Mammary epithelial cell (primary cell): ENCODE measurements at regions of chr1 and their contacts with region 1.

Region 1: GRCh38 chr1:160726498-160727315 is 12.3 kb upstream of the SLAMF7 start:
- DNase-seq: peak; percentile 72
- H3K4me3 ChIP-seq: no peak overlapping the region
- H3K27ac ChIP-seq: peak overlapping the region; percentile 54
- H3K4me1 ChIP-seq: peaks cover 39% of the 10 kb centered on the region
- H3K27me3 ChIP-seq: no peaks in the 10 kb centered on the region
- CTCF ChIP-seq: peak; percentile 83 to 87

Region 2: DNA sequence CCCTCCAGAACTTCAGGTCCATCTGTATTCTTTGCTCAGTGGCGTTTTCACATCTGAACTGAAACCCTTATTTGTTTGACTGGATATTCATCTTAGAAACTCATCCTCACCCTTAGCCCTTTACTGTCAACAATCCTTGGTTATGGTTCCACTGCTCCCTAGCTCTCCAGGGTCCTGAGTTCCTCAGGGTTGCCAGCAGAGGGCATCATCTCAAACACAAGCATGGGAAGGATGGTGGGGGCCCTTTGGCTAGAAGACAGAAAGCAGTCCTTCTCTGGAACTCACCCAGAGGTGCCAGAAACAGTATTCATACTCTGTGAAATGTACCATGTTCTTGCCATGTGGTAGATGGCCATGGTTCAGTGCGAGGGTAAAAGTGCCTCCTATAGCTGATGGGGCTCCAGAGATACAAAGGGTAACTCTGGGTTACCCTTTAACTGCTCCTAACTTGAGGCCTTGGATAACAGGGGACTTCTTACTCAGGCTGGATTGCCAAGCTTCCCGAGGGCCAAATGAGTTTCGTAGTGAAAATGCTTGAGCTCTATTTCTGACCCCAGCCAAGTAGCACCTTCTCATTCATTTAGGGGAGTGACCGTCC is 372.2 kb before region 1 on chr1:
- CTCF ChIA-PET with region 1: no interaction called
- dilution Hi-C with region 1: no loop called
- in situ Hi-C with region 1: no loop called
- intact Hi-C with region 1: no loop called
- DNase-seq: no peak
- H3K4me3 ChIP-seq: no peak overlapping the region
- H3K27ac ChIP-seq: no peak overlapping the region
- H3K4me1 ChIP-seq: no peaks in the 10 kb centered on the region
- H3K27me3 ChIP-seq: no peaks in the 10 kb centered on the region
- CTCF ChIP-seq: peak; percentile 57 to 63

Region 3: DNA sequence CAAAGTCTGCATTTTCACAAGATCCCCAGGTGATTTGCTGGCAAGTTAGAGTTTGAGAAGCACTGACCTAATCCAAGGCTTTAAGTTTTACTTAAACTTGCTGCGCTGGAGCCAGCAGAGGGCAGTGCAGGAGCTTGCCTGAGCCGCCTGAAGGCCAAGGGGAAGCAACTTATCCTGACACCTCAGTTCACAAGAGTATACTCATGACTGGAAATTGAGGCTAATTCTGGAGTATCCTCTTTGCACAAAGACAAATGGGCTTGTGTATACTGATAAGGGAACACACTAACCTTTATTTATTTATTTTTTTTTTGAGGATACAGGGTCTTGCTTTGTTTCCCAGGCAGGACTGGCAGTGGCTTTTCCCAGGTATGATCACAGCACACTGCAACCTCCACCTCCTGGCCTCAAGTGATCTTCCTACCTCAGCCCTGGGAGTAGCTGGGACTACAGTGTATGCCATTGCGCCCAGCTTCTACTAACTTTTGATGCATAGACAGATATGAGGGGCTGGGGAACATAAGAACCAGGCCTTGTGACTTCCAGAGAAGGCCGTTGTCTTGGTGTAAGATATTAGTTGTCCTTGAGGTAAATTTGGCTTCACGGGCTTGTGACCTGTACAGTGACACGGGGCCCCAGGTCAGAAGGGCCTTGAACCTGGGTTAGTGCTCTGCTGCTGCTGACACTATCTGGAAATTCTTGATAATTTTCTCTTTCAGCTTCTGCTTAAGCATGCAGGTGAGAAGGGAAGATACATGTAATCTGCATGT is 50.9 kb before region 1 on chr1:
- CTCF ChIA-PET with region 1: no interaction called
- dilution Hi-C with region 1: no loop called
- in situ Hi-C with region 1: no loop called
- intact Hi-C with region 1: loop called (anchors 1 kb)
- DNase-seq: peak; percentile 41
- H3K4me3 ChIP-seq: no peak overlapping the region
- H3K27ac ChIP-seq: no peak overlapping the region
- H3K4me1 ChIP-seq: no peaks in the 10 kb centered on the region
- H3K27me3 ChIP-seq: peaks cover 6% of the 10 kb centered on the region
- CTCF ChIP-seq: peak; percentile 87 to 93

Region 4: DNA sequence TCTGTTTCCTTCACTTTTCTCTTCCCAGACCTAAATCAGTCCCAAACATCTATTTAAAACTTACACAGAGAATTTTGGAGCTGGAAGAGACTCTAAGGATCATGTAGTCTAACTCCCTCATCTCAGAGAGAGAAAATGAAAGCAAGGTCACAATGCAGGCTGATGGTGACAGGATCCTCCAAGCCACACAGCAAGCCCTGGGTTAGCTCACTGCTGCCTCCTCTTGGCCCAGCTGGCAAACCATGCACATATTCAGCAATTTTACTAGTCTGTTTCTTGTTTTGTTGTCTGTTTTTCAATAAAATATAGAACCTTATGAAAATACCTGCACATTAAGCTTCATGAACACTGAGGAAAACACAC is 41.6 kb after region 1 on chr1:
- CTCF ChIA-PET with region 1: interaction called, 5 read pairs
- dilution Hi-C with region 1: no loop called
- in situ Hi-C with region 1: no loop called
- intact Hi-C with region 1: loop called (anchors 1 kb)
- DNase-seq: peak; percentile 40
- H3K4me3 ChIP-seq: no peak overlapping the region
- H3K27ac ChIP-seq: peak overlapping the region; percentile 33
- H3K4me1 ChIP-seq: peaks cover 13% of the 10 kb centered on the region
- H3K27me3 ChIP-seq: no peaks in the 10 kb centered on the region
- CTCF ChIP-seq: peak; percentile 75 to 88

Region 5: DNA sequence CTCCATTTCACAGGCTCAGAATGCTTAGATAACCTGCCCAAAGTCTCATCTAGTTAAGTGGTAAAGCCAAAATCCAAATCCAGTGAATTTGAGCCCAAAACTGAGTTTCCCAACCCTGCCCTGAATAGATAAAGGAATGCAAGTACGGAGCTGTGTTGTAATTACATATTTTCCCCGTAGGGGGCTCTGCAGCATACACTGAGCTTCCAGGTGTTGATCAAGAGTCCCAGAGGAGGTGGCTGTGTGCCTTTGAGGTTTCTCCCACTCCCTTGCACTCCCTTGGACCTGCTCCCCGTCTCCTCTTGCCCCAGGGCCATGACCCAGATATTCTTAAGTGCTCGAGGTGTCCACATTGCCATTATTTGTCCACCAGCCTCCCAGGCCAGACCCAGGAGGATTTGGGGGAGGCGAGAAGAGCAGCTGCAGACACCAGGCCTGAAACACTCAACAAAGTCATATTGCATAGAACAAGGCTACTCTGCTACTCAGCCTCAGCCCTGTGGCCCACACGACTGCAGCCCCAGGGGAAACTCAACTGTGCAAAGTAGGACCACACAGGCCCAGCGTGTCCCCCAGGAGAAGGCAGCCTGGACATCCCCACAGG is 50.9 kb after region 1 on chr1:
- CTCF ChIA-PET with region 1: interaction called, 3 read pairs
- dilution Hi-C with region 1: no loop called
- in situ Hi-C with region 1: no loop called
- intact Hi-C with region 1: loop called (anchors 2 kb)
- DNase-seq: peak; percentile 31
- H3K4me3 ChIP-seq: no peak overlapping the region
- H3K27ac ChIP-seq: no peak overlapping the region
- H3K4me1 ChIP-seq: peaks cover 4% of the 10 kb centered on the region
- H3K27me3 ChIP-seq: no peaks in the 10 kb centered on the region
- CTCF ChIP-seq: peak; percentile 64 to 73

Region 6: DNA sequence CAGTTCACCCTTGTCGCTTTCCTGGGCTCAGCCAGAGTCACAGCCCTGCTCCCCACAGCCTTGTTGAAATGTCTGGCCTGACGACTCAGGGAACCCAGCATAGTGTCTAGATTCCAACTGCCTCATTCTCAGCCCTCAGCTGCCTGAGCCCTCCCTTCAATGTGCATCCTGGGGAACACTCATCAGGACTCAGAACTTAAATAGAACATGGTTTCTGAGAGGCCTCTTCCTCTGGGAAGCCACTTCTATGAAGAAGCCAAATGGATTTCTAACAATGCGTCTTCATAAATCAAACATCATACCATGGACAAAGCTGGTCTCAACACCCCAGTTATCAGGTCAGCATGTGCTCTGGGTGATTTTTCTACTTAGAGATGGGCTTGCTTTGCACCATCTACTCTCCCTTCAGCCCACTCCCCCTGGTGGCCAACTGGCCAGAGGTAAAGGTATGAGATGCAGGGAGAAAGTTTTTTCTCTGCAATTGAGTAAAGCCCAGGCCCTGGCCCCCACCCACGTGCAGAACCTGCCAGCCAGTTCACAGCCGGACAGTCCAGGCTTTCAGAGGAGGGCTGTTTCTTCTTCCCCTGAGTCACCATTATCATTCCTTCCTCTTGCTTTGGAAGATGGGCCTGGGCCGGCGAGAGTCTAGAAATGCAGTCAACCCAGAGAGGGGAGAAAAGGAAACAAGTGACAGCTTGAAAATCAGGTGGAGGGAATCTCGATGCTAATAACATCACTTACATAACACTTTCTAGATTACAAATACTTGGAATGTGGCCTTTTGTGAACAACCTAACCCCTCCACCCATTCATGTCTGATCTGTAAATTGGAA is 103.8 kb after region 1 on chr1:
- CTCF ChIA-PET with region 1: interaction called, 4 read pairs
- dilution Hi-C with region 1: loop called (anchors 25 kb)
- in situ Hi-C with region 1: loop called (anchors 5 to 10 kb)
- intact Hi-C with region 1: loop called (anchors 1 kb)
- DNase-seq: peak; percentile 46
- H3K4me3 ChIP-seq: no peak overlapping the region
- H3K27ac ChIP-seq: no peak overlapping the region
- H3K4me1 ChIP-seq: peaks cover 17% of the 10 kb centered on the region
- H3K27me3 ChIP-seq: no peaks in the 10 kb centered on the region
- CTCF ChIP-seq: peak; percentile 63 to 90

Region 7: GRCh38 chr1:160855181-160855981 is 128.7 kb after region 1 on chr1:
- CTCF ChIA-PET with region 1: no interaction called
- dilution Hi-C with region 1: no loop called
- in situ Hi-C with region 1: no loop called
- intact Hi-C with region 1: no loop called
- DNase-seq: no peak
- H3K4me3 ChIP-seq: no peak overlapping the region
- H3K27ac ChIP-seq: no peak overlapping the region
- H3K4me1 ChIP-seq: no peaks in the 10 kb centered on the region
- H3K27me3 ChIP-seq: no peaks in the 10 kb centered on the region
- CTCF ChIP-seq: no peak

Region 8: DNA sequence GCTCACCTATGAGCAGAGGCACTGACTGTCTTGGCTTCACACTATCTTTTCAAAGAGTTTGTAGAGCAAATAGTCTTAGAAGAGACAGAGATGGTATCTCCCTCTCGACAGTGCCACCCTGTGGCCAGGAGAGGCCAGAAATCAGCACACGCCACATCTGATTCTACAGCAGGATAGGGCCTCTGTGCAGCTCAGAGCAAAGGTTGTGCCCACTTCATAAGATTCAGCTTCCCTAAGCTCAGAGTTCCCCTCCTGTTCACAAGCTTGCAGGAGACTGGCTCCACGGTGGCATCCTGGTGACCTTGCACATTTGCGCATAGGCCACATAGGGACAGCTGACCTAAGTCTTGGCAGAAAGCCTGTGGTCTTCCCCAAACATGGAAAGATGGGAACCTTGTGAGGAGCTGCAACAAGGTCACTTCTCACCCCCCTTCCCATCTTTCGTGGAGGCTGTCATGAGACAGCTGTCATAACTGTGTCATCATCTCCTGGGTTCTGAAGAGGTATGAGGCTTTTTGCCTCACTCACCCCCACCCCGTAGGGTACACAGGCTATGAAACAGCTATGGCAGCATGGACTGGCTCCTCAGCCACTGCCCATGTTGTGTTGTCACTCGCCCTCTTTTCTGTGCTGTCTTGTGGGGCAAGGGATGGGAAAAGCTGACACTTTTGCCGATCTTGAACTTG is 224.9 kb after region 1 on chr1:
- CTCF ChIA-PET with region 1: no interaction called
- dilution Hi-C with region 1: no loop called
- in situ Hi-C with region 1: loop called in 1 of 2 experiments (anchors 25 kb)
- intact Hi-C with region 1: loop called (anchors 1 kb)
- DNase-seq: peak; percentile 69
- H3K4me3 ChIP-seq: no peak overlapping the region
- H3K27ac ChIP-seq: peak overlapping the region; percentile 70
- H3K4me1 ChIP-seq: peaks cover 38% of the 10 kb centered on the region
- H3K27me3 ChIP-seq: no peaks in the 10 kb centered on the region
- CTCF ChIP-seq: peak; percentile 84 to 86

Region 9: GRCh38 chr1:161132410-161133219 is 405.9 kb after region 1 on chr1 and contains the start of gene DEDD:
- CTCF ChIA-PET with region 1: no interaction called
- dilution Hi-C with region 1: no loop called
- in situ Hi-C with region 1: no loop called
- intact Hi-C with region 1: loop called (anchors 5 kb)
- DNase-seq: peak; percentile 97
- H3K4me3 ChIP-seq: peak within 1 kb of the TSS; percentile 57 to 88 (median 65)
- H3K27ac ChIP-seq: peak within 1 kb of the TSS; percentile 91
- H3K4me1 ChIP-seq: peaks cover 10% of the 10 kb centered on the region
- H3K27me3 ChIP-seq: no peaks in the 10 kb centered on the region
- CTCF ChIP-seq: peak in 1 of 2 donors; percentile 17
- total RNA-seq, gene DEDD: 40.0 to 42.3 TPM

Region 10: DNA sequence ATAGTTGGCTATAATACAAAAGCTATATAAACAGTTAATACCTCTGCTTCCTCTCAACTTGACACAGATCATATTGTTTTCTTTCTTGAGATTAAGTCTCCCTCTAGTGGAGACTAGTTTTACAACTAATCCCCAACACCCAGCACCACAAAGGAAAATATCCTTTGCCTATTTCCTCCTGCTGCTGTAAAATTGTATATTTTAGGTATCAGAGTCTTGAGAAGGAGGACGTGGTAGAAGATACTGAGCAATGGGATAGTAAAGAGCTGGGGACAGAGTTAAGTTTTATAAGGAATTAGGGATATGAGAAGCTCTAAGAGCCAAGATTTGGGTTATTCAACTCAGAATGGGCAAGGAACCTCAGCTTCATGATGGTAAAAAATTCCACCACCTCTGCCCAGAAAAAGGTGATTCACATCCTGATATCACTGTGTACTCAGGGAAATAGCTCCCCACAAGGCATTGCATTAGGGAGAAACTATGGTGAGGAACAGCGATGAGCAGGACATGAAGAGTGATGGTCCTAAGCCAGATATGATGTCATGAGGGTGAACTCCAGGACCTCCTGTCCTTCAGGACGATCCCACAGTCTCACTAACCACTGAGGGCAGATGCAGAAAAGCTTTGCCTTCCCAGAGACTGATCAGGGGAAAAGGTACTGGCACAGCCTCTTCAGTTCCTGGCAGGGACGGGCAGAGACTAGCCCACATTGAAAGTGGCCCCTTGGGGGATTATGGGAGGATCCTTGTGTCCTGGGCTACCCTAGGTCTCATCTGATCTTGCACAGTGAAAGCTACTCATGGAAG is 655.7 kb after region 1 on chr1:
- CTCF ChIA-PET with region 1: no interaction called
- dilution Hi-C with region 1: no loop called
- in situ Hi-C with region 1: no loop called
- intact Hi-C with region 1: no loop called
- DNase-seq: peak; percentile 80
- H3K4me3 ChIP-seq: peak overlapping the region in 2 of 3 experiments; percentile 5 to 26
- H3K27ac ChIP-seq: peak overlapping the region; percentile 91
- H3K4me1 ChIP-seq: peaks cover 20% of the 10 kb centered on the region
- H3K27me3 ChIP-seq: no peaks in the 10 kb centered on the region
- CTCF ChIP-seq: peak; percentile 47 to 63